ENCODE measurements at regions of chr3 and their contacts with region 1.

Region 1: DNA sequence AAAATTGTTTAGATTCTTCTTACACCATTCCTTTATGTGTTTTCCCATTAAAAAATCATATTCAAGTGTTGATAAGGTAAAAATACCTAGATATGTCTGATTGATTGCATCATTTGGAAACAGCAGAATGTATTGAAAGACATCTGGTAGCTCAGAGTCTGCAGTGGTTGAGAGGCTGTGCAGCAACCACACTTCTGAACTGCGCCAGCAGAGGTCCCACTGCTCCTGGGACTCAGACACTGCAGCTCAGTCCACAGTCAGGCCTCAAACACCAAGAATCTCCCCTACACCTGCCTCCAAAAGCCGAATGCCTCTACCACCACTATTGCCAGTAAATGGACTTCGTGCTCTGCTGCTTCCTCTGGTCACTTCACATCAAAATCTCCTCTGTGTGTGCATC is 176.9 kb upstream of the LMCD1 start:
- DNase-seq: peak; percentile 46 to 80 (median 71)
- ATAC-seq: peak; percentile 75 to 82
- H3K4me3 ChIP-seq: no peak overlapping the region
- H3K27ac ChIP-seq: no peak overlapping the region
- H3K4me1 ChIP-seq: no peaks in the 10 kb centered on the region
- H3K27me3 ChIP-seq: no peaks in the 10 kb centered on the region

Region 2: DNA sequence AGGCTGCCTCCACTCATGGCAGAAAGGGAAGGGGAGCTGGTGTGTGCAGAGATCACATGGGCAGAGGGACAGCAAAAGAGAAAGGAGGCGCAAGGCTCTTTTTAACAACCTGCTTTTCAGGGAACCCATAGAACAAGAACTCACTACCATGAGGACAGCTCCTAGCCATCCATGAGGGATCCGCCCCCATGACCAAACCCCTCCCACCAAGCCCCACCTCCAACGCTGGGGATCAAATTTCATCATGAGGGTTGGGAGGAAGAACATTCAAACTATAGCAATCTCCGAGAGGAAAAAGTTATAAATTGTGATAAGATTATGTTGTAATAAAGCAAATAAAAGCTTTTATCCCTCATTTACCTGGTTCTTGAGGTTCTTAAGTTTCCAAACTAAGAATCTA is 92.2 kb after region 1 on chr3:
- intact Hi-C with region 1: loop called in 3 of 4 experiments (anchors 5 to 10 kb)
- DNase-seq: peak in 1 of 3 donors; percentile 68
- ATAC-seq: peak in 1 of 2 donors; percentile 66
- H3K4me3 ChIP-seq: no peak overlapping the region
- H3K27ac ChIP-seq: no peak overlapping the region
- H3K4me1 ChIP-seq: no peaks in the 10 kb centered on the region
- H3K27me3 ChIP-seq: no peaks in the 10 kb centered on the region

Measured in right cardiac atrium (tissue), 5 donors.